ENCODE measurements at regions of chr3 and their contacts with region 1.

Region 1: GRCh38 chr3:112464264-112464663 is 35.0 kb downstream of the BTLA start:
- DNase-seq: peak in 3 of 10 donors; percentile 41 to 46 (median 45)
- ATAC-seq: peak; percentile 76 to 84
- H3K4me3 Mint-ChIP-seq: peak overlapping the region; percentile 36 to 82 (median 65)
- H3K27ac Mint-ChIP-seq: peak overlapping the region; percentile 29 to 94 (median 85)
- H3K4me1 Mint-ChIP-seq: peaks cover 43 to 88% (median 86%) of the 10 kb centered on the region in 4 donors
- H3K27me3 Mint-ChIP-seq: no peaks in the 10 kb centered on the region

Region 2: GRCh38 chr3:112498914-112499711 is 34.8 kb after region 1 on chr3 and contains the start of gene BTLA:
- POLR2A ChIA-PET with region 1: interaction called, 12 read pairs
- DNase-seq: peak in 6 of 10 donors; percentile 15 to 59 (median 30)
- ATAC-seq: peak; percentile 72 to 77
- H3K4me3 Mint-ChIP-seq: peak within 1 kb of the TSS; percentile 91 to 98 (median 96)
- H3K27ac Mint-ChIP-seq: peak within 1 kb of the TSS; percentile 85 to 99 (median 92)
- H3K4me1 Mint-ChIP-seq: peaks cover 19 to 68% (median 54%) of the 10 kb centered on the region in 4 donors
- H3K27me3 Mint-ChIP-seq: no peaks in the 10 kb centered on the region
- polyA plus RNA-seq, gene BTLA: 5.5 to 13.8 (median 10.2) TPM

Region 3: GRCh38 chr3:112585782-112586181 is 121.5 kb after region 1 on chr3:
- POLR2A ChIA-PET with region 1: no interaction called
- DNase-seq: no peak
- ATAC-seq: no peak
- H3K4me3 Mint-ChIP-seq: no peak overlapping the region
- H3K27ac Mint-ChIP-seq: peak overlapping the region in 3 of 10 donors; percentile 13 to 65 (median 22)
- H3K4me1 Mint-ChIP-seq: peaks cover 4 to 21% (median 13%) of the 10 kb centered on the region in 4 donors
- H3K27me3 Mint-ChIP-seq: no peaks in the 10 kb centered on the region